Astrocyte of the cerebellum (primary cell): ENCODE measurements at regions of chr9 and their contacts with region 1.

Region 1: DNA sequence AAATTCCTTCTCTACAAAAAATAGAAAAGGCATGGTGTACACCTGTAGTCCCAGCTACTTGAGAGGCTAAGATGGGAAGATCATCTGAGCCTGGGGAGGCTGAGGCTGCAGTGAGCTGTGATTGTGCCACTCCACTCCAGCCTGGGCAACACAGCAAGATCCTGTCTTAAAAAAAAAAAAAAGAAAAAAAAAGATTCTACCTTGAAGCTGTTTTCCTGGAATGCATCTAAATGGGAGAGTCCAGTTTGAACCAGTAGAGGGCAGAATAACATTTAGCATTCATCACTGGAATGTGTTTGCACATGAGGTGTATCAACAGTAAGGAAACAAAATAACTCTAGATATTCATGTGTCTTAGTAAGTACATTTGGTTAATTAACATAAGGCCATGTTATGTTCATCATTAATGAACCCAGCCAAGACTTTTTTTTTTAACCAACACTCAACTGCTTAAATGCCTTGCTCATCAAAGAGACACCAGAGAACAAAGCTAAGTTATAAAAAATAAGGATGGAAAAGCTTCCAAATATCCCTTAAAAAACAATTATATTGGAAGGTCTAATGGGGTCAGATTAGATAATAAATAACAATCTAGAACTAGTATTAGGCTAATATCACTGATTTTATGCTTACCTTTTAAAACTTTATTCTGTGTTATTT is 16.1 kb downstream of the IFNE start:
- DNase-seq: peak; percentile 62
- H3K4me3 ChIP-seq: no peak overlapping the region
- CTCF ChIP-seq: peak; percentile 56

Region 2: DNA sequence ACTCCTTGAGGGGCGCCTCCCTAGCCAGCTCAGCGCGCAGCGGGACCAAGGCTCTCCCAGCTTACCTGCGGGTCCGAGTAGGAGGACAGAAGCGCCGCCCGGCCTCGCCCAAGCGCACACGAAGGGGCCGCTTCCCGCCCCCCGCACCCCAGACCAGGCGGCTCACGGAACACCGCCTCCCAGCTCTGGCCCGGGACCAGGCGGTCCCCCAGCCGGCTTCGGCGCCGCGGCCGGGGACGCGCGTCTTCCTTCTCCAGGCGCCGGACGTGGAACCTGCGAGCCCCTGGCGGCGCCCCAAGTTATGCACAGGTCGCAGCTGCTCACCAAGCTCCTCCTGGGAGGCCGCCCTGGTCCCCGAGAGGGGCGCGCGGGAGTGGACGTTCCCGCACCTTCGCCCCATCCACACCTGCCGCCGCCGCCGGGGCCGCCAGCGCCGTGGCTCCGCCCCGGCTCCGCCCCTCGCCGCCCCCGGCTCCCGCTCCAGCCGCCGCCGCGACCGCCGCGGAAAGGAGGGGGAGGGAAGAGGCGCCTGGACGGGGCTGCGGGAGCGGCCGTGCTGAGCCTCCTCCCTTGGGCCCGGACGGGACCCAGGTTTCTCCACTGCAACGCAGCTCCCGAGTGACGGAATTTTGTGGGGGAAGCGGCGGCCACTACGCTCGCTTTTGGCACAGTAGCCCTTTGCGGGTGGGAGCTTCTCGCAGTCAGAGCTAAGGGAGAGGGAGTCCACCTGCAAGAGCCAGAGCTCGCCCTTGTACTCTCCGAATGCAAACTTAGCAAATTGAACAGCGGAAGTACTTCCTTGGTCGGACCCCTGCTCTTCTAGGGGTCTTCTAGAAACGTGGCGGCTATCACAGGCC is 93.7 kb after region 1 on chr9:
- in situ Hi-C with region 1: loop called (anchors 5 kb)
- DNase-seq: peak; percentile 43
- H3K4me3 ChIP-seq: peak overlapping the region; percentile 84
- CTCF ChIP-seq: no peak